Activated CD8-positive, alpha-beta T cell treated with anti-CD3 and anti-CD28 coated beads, Interleukin-2, amount 10 ng/mL, durations not matched to agents 7 days and 5 days (primary cell): ENCODE measurements at regions of chr2 and their contacts with region 1.

Region 1: DNA sequence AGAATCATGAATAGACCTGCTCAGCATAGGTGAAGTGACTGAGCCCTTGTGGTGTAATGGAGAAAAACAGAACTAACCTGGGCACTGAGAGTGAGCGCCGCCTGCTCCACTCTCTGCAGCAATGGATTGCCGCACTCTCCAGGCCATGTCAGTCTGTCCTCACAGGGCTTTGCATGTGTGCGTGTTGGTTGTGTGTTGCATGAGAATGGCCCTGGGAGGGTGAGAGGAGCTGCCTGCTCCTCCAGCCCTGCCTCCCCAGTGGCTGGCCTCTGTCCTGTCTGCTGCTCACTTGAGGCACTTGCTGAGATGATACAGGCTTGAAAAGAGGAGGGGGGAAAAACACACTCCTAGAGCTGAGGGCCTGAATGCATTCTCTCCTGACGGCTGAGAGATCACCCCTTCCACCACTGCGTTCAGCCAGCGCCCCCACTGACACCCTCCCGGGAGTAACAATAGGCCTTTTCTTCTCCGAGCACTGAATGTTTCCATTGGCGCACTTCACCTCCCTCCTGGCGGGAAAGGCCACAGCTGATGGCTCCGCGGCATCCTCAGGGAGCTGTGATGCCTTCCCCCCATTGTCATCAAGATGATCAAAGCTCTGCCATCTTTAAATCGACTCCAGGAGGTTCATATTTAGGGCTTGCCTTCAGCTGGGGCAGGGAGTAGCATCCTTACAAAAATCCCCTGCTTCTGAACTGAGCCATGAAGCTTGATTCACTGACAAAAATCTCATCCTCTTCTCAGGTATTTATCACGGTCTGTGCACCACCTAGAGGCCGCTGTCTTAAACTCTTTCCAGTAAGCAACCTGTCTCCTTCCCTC is 49.9 kb upstream of the DAPL1 start:
- DNase-seq: peak; percentile 49
- ATAC-seq: no peak
- H3K4me3 Mint-ChIP-seq: no peak overlapping the region
- H3K27ac Mint-ChIP-seq: no peak overlapping the region
- H3K4me1 Mint-ChIP-seq: peaks cover 5% of the 10 kb centered on the region
- H3K27me3 Mint-ChIP-seq: peaks cover 20% of the 10 kb centered on the region

Region 2: DNA sequence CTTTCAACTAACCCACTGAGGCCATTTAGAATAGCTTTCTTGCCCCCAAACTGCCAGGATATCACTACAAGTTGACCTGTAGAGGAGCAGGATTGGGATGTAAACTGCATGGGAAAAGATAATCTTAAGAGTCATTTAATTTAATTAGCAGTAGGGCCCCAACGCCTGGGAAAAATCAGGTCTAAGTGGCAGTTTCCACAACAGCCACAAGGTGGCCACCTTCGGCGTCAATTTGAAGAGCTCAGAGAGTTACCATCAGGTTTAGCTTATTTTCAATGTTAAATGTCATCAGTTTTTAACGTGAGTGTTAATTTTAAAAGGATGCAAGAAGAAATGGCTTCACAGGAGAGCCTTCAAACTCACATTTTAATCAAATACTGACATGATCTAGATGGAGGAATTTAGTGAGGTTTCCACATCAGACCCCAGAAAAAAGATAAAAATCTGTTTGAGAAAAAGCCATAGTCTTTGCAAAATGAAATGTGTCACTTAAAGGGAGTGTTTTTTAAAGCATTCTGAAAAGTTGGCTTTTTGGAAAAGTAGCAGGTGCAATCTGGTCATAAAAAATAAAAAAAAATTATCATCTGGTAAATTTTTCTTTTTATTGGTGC is 720.9 kb before region 1 on chr2:
- CTCF ChIA-PET with region 1: interaction called, 41 read pairs
- POLR2A ChIA-PET with region 1: no interaction called
- DNase-seq: peak; percentile 63
- ATAC-seq: peak; percentile 64
- H3K4me3 Mint-ChIP-seq: no peak overlapping the region
- H3K27ac Mint-ChIP-seq: no peak overlapping the region
- H3K4me1 Mint-ChIP-seq: peaks cover 4% of the 10 kb centered on the region
- H3K27me3 Mint-ChIP-seq: peaks cover 3% of the 10 kb centered on the region

Region 3: DNA sequence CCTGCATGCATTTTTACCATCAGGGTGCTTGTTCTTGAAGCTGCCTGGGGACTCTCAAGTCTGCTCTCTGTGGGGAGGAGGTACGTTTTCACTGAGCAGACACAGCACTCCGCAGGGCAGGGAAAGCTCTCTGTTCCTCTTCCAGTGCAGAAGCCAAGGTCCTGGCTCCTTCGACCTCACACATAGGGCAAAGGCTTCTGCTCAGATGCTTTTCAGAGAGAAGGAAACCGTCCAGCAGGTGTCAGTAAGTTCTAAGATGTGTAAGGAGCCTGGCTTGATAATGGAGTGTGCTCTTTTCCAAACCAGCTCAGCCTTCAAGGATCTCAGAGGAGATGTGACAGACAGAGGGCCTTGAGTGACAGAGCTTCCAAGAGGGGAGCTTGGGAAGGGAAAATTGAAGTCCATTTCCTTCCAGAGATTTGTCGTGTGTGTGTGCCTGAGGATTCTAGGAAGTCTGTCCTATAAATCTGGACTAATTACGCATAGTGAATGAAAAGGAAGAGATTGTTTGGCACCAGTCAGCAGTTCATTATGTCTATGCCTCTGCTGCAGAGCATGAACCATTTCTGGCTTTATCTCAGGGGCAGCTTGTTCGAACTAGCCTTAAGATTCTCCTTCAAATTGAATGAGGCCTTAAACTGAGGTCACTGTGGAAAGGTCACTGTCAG is 710.9 kb before region 1 on chr2:
- CTCF ChIA-PET with region 1: interaction called, 12 read pairs
- POLR2A ChIA-PET with region 1: no interaction called
- DNase-seq: peak; percentile 30
- ATAC-seq: no peak
- H3K4me3 Mint-ChIP-seq: no peak overlapping the region
- H3K27ac Mint-ChIP-seq: no peak overlapping the region
- H3K4me1 Mint-ChIP-seq: no peaks in the 10 kb centered on the region
- H3K27me3 Mint-ChIP-seq: peaks cover 2% of the 10 kb centered on the region

Region 4: DNA sequence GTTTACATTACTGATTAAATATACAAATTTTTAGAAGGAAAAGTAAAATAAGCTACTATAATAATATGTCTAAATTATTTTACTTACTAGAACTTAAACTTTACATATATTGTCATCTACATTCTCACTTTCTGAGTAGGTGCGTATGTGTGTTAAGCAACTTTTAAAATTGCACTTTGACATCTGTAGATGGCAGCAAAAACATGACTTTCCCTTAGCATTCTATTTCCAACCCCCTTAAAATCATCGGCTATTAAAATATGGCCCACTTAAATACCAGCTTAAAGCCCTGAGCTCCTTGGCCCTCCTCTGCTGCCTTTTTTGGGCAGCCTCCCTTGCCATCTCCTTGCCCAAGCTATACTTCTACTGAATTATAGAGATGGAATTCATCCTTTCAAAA is 565.6 kb before region 1 on chr2:
- CTCF ChIA-PET with region 1: interaction called, 14 read pairs
- POLR2A ChIA-PET with region 1: no interaction called
- DNase-seq: no peak
- ATAC-seq: no peak
- H3K4me3 Mint-ChIP-seq: no peak overlapping the region
- H3K27ac Mint-ChIP-seq: no peak overlapping the region
- H3K4me1 Mint-ChIP-seq: no peaks in the 10 kb centered on the region
- H3K27me3 Mint-ChIP-seq: peaks cover 22% of the 10 kb centered on the region

Region 5: GRCh38 chr2:158240975-158241374 is 504.3 kb before region 1 on chr2:
- CTCF ChIA-PET with region 1: no interaction called
- POLR2A ChIA-PET with region 1: no interaction called
- DNase-seq: no peak
- ATAC-seq: no peak
- H3K4me3 Mint-ChIP-seq: no peak overlapping the region
- H3K27ac Mint-ChIP-seq: no peak overlapping the region
- H3K4me1 Mint-ChIP-seq: no peaks in the 10 kb centered on the region
- H3K27me3 Mint-ChIP-seq: no peaks in the 10 kb centered on the region